Head of caudate nucleus (tissue), 42 donors: ENCODE measurements at regions of chr11 and their contacts with region 1.

Region 1: DNA sequence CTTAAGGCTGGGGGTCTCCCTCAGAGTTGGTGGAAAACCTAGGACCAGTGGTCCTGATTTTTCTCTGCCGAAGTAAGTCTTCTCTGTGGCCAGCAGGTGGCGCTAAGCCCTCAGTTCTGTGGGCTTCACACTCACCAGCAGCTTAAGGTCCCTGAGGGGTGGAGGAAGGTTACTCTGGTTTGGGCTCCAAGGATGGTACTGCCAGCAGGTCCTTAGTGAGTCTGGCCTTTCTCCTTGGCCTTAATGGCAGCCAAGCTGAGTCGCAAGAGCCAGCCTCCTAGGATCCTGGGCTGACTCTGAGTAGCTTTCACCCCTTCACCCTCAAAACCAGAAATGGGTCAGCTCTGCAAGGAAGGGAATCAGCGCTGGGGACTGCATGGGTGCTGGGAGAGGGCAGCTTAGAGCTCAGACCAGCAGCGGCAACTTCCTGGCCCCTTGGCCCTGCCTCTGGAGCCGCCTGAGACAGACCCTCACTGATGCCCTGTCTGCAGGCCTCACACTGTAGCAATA is 4.4 kb downstream of the KCNJ11 start:
- DNase-seq: peak; percentile 55 to 93 (median 86)

Region 2: GRCh38 chr11:17504330-17505107 is 120.5 kb after region 1 on chr11:
- intact Hi-C with region 1: loop called (anchors 2 kb)
- DNase-seq: peak; percentile 73 to 91 (median 84)

Region 3: DNA sequence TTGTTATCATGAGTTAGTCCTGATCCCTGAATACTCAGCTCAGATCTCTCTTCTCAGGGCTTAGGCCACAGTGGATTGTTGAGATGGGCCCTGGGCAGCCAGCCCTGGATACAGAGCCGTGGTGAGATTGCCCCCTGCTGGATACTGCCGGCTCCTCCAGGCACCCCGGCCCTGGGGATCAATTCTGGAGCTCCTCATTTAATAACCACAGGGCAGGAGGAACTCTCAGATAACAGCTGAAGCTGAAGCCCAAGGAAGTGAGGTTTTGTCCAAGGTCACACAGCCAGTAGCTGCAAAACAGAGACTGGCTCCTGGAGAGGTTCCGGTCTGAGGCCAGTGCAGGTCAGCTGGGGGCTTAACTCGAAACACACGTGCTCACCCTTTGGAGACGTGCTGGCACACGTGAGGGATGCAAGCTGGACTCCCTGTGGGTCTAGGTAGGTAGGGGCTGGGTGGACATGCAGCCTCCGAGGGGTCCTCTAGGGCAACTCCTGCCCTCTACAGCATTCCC is 144.2 kb after region 1 on chr11:
- intact Hi-C with region 1: loop called (anchors 5 kb)
- DNase-seq: peak; percentile 62 to 89 (median 78)